MCF 10A (cell line): ENCODE measurements at regions of chr5 and their contacts with region 1.

Region 1: GRCh38 chr5:128538250-128539037 is 399 bp upstream of the FBN2 start:
- DNase-seq: peak; percentile 98
- H3K4me3 Mint-ChIP-seq: peak overlapping the region; percentile 79
- H3K27ac Mint-ChIP-seq: peak overlapping the region; percentile 26
- H3K4me1 Mint-ChIP-seq: peaks cover 20% of the 10 kb centered on the region
- H3K27me3 Mint-ChIP-seq: no peaks in the 10 kb centered on the region
- CTCF ChIP-seq: no peak

Region 2: DNA sequence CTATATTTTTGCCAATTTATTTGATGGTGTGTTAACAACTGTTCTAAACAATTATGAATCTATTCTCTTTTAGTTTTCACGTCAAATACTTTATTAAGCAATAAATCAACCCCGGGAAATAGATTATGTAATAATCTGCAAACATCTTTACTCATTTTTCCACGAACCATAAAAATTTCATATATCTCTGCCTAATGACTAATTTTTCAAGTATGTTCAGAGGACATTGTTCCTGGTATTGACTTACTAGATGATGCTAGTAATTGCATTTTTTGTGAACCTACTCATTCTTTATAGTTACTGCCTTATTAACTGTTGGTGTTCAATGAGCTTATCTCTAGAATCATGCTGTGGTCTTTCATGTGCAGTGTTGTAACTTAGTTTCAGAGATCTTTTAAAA is 40.6 kb after region 1 on chr5:
- CTCF ChIA-PET with region 1: interaction called, 3 read pairs
- POLR2A ChIA-PET with region 1: interaction called, 7 read pairs
- intact Hi-C with region 1: loop called (anchors 2 kb)
- DNase-seq: peak; percentile 70
- H3K4me3 Mint-ChIP-seq: no peak overlapping the region
- H3K27ac Mint-ChIP-seq: peak overlapping the region; percentile 73
- H3K4me1 Mint-ChIP-seq: peaks cover 26% of the 10 kb centered on the region
- H3K27me3 Mint-ChIP-seq: no peaks in the 10 kb centered on the region
- CTCF ChIP-seq: no peak

Region 3: GRCh38 chr5:128644863-128645262 is 106.4 kb after region 1 on chr5:
- CTCF ChIA-PET with region 1: no interaction called
- POLR2A ChIA-PET with region 1: interaction called, 4 read pairs
- intact Hi-C with region 1: loop called (anchors 5 kb)
- DNase-seq: peak; percentile 42
- H3K4me3 Mint-ChIP-seq: peak overlapping the region; percentile 50
- H3K27ac Mint-ChIP-seq: peak overlapping the region; percentile 43
- H3K4me1 Mint-ChIP-seq: peaks cover 28% of the 10 kb centered on the region
- H3K27me3 Mint-ChIP-seq: no peaks in the 10 kb centered on the region
- CTCF ChIP-seq: no peak

Region 4: DNA sequence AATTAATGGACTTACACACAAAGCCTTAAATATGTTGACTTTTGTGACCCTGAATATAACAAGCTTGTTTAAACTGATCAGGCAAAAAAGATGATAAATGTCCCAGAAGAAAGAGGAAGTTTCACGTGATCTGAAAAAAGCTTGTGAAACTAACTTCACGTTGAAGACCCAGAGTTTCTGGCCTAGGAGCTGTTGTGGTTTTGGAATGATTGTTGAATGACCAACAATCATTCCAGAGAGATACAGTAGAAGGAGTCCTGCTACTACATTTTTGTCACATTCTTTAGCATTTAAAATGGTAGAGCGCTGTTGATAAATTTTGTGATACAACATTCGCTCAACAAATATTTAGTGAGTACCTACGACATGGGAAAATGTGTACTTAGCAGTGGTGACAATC is 142.7 kb after region 1 on chr5:
- CTCF ChIA-PET with region 1: no interaction called
- POLR2A ChIA-PET with region 1: no interaction called
- intact Hi-C with region 1: no loop called
- DNase-seq: no peak
- H3K4me3 Mint-ChIP-seq: no peak overlapping the region
- H3K27ac Mint-ChIP-seq: no peak overlapping the region
- H3K4me1 Mint-ChIP-seq: no peaks in the 10 kb centered on the region
- H3K27me3 Mint-ChIP-seq: no peaks in the 10 kb centered on the region
- CTCF ChIP-seq: no peak

Region 5: GRCh38 chr5:128757196-128757959 is 218.9 kb after region 1 on chr5:
- CTCF ChIA-PET with region 1: no interaction called
- POLR2A ChIA-PET with region 1: no interaction called
- intact Hi-C with region 1: no loop called
- DNase-seq: no peak
- H3K4me3 Mint-ChIP-seq: no peak overlapping the region
- H3K27ac Mint-ChIP-seq: no peak overlapping the region
- H3K4me1 Mint-ChIP-seq: no peaks in the 10 kb centered on the region
- H3K27me3 Mint-ChIP-seq: no peaks in the 10 kb centered on the region
- CTCF ChIP-seq: no peak

Region 6: GRCh38 chr5:128782446-128782845 is 244.0 kb after region 1 on chr5:
- CTCF ChIA-PET with region 1: no interaction called
- POLR2A ChIA-PET with region 1: interaction called, 3 read pairs
- intact Hi-C with region 1: loop called (anchors 10 kb)
- DNase-seq: peak; percentile 99
- H3K4me3 Mint-ChIP-seq: no peak overlapping the region
- H3K27ac Mint-ChIP-seq: peak overlapping the region; percentile 59
- H3K4me1 Mint-ChIP-seq: peaks cover 17% of the 10 kb centered on the region
- H3K27me3 Mint-ChIP-seq: no peaks in the 10 kb centered on the region
- CTCF ChIP-seq: no peak

Region 7: GRCh38 chr5:128844354-128844923 is 306.0 kb after region 1 on chr5:
- CTCF ChIA-PET with region 1: no interaction called
- POLR2A ChIA-PET with region 1: no interaction called
- intact Hi-C with region 1: loop called (anchors 2 kb)
- DNase-seq: peak; percentile 46
- H3K4me3 Mint-ChIP-seq: no peak overlapping the region
- H3K27ac Mint-ChIP-seq: no peak overlapping the region
- H3K4me1 Mint-ChIP-seq: no peaks in the 10 kb centered on the region
- H3K27me3 Mint-ChIP-seq: no peaks in the 10 kb centered on the region
- CTCF ChIP-seq: peak; percentile 59

Region 8: DNA sequence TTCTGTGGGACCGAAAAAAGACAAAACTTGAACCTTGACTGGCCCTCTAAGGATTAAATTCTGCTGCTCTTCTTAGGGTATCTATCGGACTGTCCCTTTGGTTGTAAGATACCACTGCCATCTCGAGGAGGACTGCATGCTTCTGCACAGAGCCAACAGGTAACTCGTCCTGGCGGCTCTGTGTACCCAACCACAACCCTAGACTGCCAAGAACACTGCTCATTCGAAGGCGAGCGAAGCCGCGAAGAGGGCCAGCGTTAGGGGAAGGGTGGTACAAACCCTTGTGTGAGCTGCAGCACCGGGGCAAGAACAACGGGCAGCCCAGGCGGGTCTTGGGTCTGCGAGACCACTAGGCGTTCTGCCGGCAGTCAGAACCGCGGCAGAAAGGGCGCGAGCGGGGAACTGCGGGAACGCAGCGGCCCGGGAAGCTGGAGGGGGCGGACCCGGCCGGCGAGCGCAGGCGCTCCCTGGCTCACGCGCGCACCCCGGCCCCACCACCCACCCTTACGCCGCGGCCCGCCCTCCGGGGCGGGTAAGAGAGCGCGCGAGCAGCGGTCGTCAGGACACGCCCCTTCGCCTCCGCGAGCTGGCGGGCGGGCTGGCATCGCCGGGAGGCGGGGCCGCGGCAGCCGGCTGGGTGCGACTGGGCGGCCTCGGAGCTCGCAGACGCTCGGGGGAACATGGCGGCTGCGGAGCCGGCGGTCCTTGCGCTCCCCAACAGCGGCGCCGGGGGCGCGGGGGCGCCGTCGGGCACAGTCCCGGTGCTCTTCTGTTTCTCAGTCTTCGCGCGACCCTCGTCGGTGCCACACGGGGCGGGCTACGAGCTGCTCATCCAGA is 555.9 kb after region 1 on chr5 and contains the start of gene ISOC1:
- CTCF ChIA-PET with region 1: no interaction called
- POLR2A ChIA-PET with region 1: no interaction called
- intact Hi-C with region 1: loop called (anchors 10 kb)
- DNase-seq: peak; percentile 94
- H3K4me3 Mint-ChIP-seq: peak within 1 kb of the TSS; percentile 84
- H3K27ac Mint-ChIP-seq: peak within 1 kb of the TSS; percentile 46
- H3K4me1 Mint-ChIP-seq: peaks cover 20% of the 10 kb centered on the region
- H3K27me3 Mint-ChIP-seq: peaks cover 21% of the 10 kb centered on the region
- CTCF ChIP-seq: no peak
- total RNA-seq, gene ISOC1: 11.2 and 12.8 TPM in 2 replicates